H1 (cell line): ENCODE measurements at regions of chr11 and their contacts with region 1.

Region 1: GRCh38 chr11:72091005-72091691 is 10.5 kb downstream of the LRRC51 start:
- DNase-seq: peak; percentile 66 to 89
- H3K4me3 ChIP-seq: no peak overlapping the region
- H3K27ac ChIP-seq: no peak overlapping the region
- H3K4me1 ChIP-seq: peaks cover 0 to 3% (median 1%) of the 10 kb centered on the region in 4 experiments; a peak in 2 of 7 replicates
- H3K27me3 ChIP-seq: no peaks in the 10 kb centered on the region
- CTCF ChIP-seq: peak; percentile 93 to 96 (median 95)
- EP300 ChIP-seq: no peak
- POLR2A ChIP-seq: no peak; a peak in 1 of 3 replicates
- RAD21 ChIP-seq: peak; percentile 87 to 91

Region 2: DNA sequence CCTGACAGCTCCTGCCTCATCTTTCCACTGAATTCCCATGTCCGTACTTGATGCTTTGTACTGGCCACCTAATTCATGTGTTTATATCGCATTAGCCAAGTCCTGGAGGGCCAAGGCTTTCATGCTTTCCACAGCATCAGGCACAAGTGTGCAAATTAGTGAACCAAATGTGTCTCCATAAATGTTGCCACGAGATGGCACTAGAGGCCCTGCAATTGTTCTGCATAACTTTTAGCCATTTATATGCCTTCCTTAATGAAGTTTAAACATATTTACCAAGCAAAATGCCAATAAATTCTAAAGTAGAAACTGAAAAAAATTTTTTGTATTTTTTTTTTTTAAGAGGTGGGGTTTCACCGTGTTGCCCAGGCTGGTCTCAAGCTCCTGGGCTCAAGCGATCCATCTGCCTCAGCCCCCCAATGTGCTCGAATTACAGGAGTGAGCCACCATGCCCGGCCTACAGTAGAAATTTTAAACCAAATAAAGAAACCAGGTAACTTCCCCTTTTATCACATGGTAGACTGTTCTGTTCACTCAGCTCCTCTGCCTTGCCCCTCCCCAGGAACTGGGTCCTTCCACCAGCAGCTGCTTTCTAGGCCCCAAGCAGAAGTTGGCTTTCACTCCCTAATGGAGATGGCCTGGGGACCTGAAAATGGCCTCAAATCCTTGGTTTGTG is 113.3 kb before region 1 on chr11:
- CTCF ChIA-PET with region 1: interaction called, 10 read pairs
- POLR2A ChIA-PET with region 1: no interaction called
- DNase-seq: peak in 1 of 2 experiments; percentile 52
- H3K4me3 ChIP-seq: no peak overlapping the region
- H3K27ac ChIP-seq: no peak overlapping the region
- H3K4me1 ChIP-seq: no peaks in the 10 kb centered on the region
- H3K27me3 ChIP-seq: no peaks in the 10 kb centered on the region
- CTCF ChIP-seq: peak in 2 of 3 experiments; percentile 58 to 60; a peak in 3 of 4 replicates
- EP300 ChIP-seq: no peak
- POLR2A ChIP-seq: no peak
- RAD21 ChIP-seq: peak; percentile 51 to 62

Region 3: DNA sequence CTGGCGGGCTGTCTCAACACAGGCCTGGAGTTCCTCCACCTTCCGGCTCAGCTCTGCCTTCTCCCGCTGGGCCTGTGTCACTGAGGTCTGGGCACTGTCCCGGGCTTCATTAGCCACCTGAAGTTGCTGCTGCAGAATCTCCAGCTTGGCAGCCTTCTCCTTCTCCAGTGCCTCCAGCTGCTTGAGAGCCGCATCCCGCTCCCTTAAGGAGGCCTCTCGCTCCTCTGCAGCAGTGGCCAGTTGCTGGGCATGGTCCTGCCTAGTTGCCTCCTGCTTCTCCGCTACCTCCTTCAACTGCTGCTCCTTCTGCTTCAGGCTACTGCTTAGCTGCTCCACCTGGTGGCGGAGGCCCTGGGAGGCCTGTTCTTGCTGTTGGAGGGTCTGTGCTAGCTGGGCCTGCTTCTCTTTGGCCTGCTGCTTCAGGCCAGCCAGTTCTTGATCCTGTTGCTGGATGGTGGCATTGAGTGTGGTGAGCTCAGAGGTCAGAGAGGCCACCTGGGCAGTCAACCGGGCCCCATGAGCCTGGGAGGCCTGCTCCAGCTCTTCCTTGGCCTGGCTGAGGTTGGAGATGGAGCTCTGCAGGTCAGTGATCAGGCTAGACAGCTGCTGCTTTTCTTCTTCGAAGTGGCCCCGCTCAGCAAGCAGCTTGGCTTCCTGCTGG is 75.5 kb before region 1 on chr11:
- CTCF ChIA-PET with region 1: interaction called, 423 read pairs
- POLR2A ChIA-PET with region 1: interaction called, 11 read pairs
- DNase-seq: no peak
- H3K4me3 ChIP-seq: no peak overlapping the region
- H3K27ac ChIP-seq: no peak overlapping the region
- H3K4me1 ChIP-seq: no peaks in the 10 kb centered on the region
- H3K27me3 ChIP-seq: no peaks in the 10 kb centered on the region
- CTCF ChIP-seq: peak; percentile 45 to 62 (median 57)
- EP300 ChIP-seq: no peak
- POLR2A ChIP-seq: no peak
- RAD21 ChIP-seq: peak; percentile 24 to 42; a peak in 3 of 4 replicates

Region 4: GRCh38 chr11:72040726-72041441 is 50.3 kb before region 1 on chr11:
- CTCF ChIA-PET with region 1: interaction called, 423 read pairs
- POLR2A ChIA-PET with region 1: interaction called, 33 read pairs
- DNase-seq: peak; percentile 50 to 73
- H3K4me3 ChIP-seq: peak overlapping the region; percentile 34 to 55 (median 42); a peak in 7 of 8 replicates
- H3K27ac ChIP-seq: peak overlapping the region; percentile 92
- H3K4me1 ChIP-seq: peaks cover 29 to 36% (median 33%) of the 10 kb centered on the region in 4 experiments
- H3K27me3 ChIP-seq: no peaks in the 10 kb centered on the region
- CTCF ChIP-seq: no peak
- EP300 ChIP-seq: peak in 1 of 2 experiments; percentile 31; a peak in 1 of 3 replicates
- POLR2A ChIP-seq: peak in 1 of 2 experiments; percentile 21; a peak in 2 of 3 replicates
- RAD21 ChIP-seq: no peak

Region 5: DNA sequence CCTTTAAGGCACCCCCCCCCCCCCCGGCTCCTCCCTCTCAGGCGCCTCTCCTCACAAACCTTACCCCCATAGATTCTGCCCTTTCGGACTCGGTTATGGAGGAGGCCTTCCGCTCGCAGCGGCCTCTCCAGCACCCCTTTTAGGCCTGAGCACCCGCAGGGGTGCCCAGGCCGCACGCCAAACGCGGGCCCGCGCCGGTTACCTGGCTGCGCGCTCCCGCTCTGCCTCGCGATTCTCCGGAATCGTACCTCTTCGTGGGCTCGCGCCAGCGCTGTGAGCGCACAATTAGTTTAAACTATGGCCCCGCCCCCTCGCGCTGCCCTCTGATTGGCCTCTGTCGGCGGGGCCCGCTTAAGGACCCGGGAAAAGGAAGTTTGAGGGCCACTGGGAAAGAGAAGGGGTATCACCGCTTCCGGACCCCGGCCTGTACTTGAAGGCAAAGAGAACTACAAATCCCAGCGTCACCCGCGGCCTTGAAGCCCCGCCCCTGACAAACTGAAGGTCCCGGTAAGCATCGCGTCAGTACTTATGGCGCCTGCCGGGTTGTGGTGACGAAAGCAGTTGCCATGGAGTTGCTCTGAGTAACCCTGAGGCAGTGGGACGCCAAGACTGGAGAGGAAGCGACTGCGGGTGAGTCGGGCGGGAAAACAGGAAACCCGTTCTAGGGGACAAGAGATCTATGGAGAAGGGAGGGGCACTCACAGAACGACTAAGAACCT is 10.7 kb before region 1 on chr11 and contains the starts of genes LRRC51 and NUMA1:
- CTCF ChIA-PET with region 1: interaction called, 33 read pairs
- POLR2A ChIA-PET with region 1: interaction called, 144 read pairs
- DNase-seq: peak; percentile 98 to 100
- H3K4me3 ChIP-seq: peak within 1 kb of the TSS; percentile 66 to 100 (median 86)
- H3K27ac ChIP-seq: peak within 1 kb of the TSS; percentile 84
- H3K4me1 ChIP-seq: no peaks in the 10 kb centered on the region; a peak in 2 of 7 replicates
- H3K27me3 ChIP-seq: no peaks in the 10 kb centered on the region
- CTCF ChIP-seq: no peak
- EP300 ChIP-seq: no peak
- POLR2A ChIP-seq: peak in 1 of 2 experiments; percentile 74; a peak in 1 of 3 replicates
- RAD21 ChIP-seq: no peak
- total RNA-seq, gene LRRC51: 6.8 and 7.9 TPM in 2 replicates
- total RNA-seq, gene NUMA1: 107 and 108 TPM in 2 replicates

Region 6: DNA sequence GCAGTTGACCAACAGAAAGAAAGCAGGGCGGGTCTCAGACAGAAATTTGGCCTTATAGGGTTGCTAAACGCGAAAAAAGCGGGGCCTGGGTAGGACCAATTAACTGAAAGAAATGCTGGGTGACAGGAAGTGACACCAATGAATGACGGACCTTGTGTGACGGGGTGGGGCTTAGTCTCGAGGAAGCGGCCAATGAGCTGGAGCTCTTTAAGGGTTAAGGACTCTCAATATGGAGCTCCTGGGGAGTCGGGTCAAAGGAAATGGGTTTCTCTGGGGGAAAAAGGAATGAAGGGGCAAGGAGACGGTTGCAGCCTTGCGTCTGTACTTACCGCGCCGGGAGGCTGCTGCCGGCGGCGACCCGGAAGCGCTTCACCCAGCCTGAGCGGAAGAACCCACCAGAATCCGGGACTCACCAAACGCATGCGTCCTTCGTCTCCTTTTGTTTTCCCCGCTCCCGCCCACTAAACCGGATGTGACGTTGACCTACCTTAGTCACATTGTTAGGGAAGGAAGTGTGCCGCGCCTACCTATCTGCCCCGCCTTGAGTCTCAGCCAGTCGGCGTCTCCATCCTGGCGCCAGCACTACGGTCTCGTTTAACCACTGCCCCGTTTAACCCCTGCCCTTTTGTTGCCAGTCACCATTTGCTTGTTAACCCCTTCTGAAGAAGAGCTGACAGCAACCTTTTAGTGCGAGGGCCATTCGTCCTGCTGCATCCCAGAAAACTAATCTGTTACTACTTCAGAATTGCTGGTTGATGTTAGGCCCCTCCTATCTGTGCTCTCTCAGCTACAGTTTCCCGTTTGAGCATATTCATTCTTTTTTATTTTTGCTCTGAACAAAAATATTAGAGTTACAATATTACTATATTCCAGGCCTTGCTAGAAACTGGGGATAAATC is 21.4 kb after region 1 on chr11 and contains the start of gene ANAPC15:
- CTCF ChIA-PET with region 1: interaction called, 4 read pairs
- POLR2A ChIA-PET with region 1: interaction called, 115 read pairs
- DNase-seq: peak; percentile 94 to 96
- H3K4me3 ChIP-seq: peak within 1 kb of the TSS; percentile 78 to 94 (median 87)
- H3K27ac ChIP-seq: peak within 1 kb of the TSS; percentile 99
- H3K4me1 ChIP-seq: peaks cover 0 to 4% (median 0%) of the 10 kb centered on the region in 4 experiments; a peak in 4 of 7 replicates
- H3K27me3 ChIP-seq: peaks cover 0 to 9% (median 0%) of the 10 kb centered on the region in 4 experiments; a peak in 6 of 7 replicates
- CTCF ChIP-seq: no peak
- EP300 ChIP-seq: no peak
- POLR2A ChIP-seq: peak; percentile 97 to 100
- RAD21 ChIP-seq: peak in 1 of 2 experiments; percentile 15; a peak in 1 of 4 replicates
- total RNA-seq, gene ANAPC15: 70.0 and 74.9 TPM in 2 replicates